IMR-90 (cell line): ENCODE measurements at regions of chr14 and their contacts with region 1.

Region 1: DNA sequence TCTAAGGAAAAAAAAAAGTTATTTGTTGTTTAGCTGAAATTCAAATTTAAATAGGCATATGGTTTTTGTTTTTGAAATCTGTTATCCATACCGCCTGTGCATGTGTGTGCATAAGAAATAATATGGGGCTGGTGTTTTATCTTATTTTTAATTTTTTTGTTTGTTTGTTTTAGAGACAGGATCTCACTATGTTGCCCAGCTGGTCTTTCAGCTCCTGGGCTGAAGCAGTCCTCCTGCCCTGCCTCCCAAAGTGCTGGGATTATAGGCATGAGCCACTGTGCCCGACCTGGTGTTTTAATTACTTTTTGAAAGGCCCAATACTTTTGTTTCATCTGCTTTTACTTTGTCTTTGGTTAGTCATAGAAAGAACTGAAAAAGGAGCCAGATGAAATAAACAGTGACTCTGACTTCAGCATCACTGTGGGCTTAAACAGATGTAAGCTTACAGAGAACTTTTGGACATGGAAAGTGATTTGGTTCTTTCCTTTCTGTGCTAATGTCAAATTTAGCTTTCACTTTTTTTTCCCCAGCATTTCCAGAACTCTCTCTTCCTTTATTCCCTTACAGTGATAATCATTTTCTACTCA is 37.2 kb downstream of the SUPT16H start:
- DNase-seq: peak; percentile 82
- ATAC-seq: peak; percentile 90
- H3K4me3 ChIP-seq: no peak overlapping the region
- H3K27ac ChIP-seq: no peak overlapping the region
- H3K4me1 ChIP-seq: 0 out of 2 replicates have a peak, but pooled peaks cover 2% of the 10 kb centered on the region
- H3K27me3 ChIP-seq: no peaks in the 10 kb centered on the region
- CTCF ChIP-seq: no peak
- POLR2A ChIP-seq: no peak
- RAD21 ChIP-seq: no peak

Region 2: DNA sequence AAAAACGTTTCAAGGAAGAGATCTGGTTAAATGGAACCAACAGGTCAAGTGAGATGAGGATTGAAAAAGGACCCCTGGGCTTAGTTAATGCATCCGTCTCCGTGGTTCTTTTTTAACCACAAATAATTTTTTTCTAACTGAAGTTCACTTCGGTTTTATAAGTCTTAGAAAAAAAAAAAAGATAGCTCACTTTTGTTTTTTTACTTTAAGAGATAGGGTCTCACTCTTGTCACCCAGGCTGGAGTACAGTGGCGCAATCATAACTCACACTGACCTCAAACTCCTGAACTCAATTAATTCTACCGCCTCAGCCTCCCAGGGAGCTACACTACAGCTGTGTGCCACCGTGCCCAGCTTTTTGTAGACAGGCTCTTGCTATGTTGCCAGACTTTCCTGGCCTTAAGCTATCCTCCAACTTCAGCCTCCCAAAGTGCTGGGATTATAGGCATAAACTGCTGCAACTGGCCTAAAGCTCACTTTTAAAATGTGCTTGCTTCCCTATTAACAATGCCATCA is 89.2 kb before region 1 on chr14:
- CTCF ChIA-PET with region 1: no interaction called
- POLR2A ChIA-PET with region 1: no interaction called
- dilution Hi-C with region 1: no loop called
- in situ Hi-C with region 1: no loop called
- intact Hi-C with region 1: no loop called
- DNase-seq: no peak
- ATAC-seq: no peak
- H3K4me3 ChIP-seq: no peak overlapping the region
- H3K27ac ChIP-seq: no peak overlapping the region
- H3K4me1 ChIP-seq: peaks cover 8% of the 10 kb centered on the region
- H3K27me3 ChIP-seq: no peaks in the 10 kb centered on the region
- CTCF ChIP-seq: no peak
- POLR2A ChIP-seq: no peak
- RAD21 ChIP-seq: no peak

Region 3: GRCh38 chr14:21269252-21270046 is 77.2 kb before region 1 on chr14 and contains the start of gene HNRNPC:
- CTCF ChIA-PET with region 1: no interaction called
- POLR2A ChIA-PET with region 1: no interaction called
- dilution Hi-C with region 1: no loop called
- in situ Hi-C with region 1: no loop called
- intact Hi-C with region 1: loop called (anchors 1 kb)
- DNase-seq: peak; percentile 100
- ATAC-seq: peak; percentile 95
- H3K4me3 ChIP-seq: peak within 1 kb of the TSS; percentile 93
- H3K27ac ChIP-seq: peak within 1 kb of the TSS; percentile 84
- H3K4me1 ChIP-seq: peaks cover 7% of the 10 kb centered on the region
- H3K27me3 ChIP-seq: no peaks in the 10 kb centered on the region
- CTCF ChIP-seq: no peak
- POLR2A ChIP-seq: peak; percentile 99
- RAD21 ChIP-seq: no peak
- total RNA-seq, gene HNRNPC: 308 and 548 TPM in 2 replicates